ENCODE measurements at regions of chr10 and their contacts with region 1.

Region 1: GRCh38 chr10:35355971-35356724 is 19.8 kb downstream of the CCNY start:
- DNase-seq: no peak
- H3K4me3 ChIP-seq: no peak overlapping the region
- H3K27ac ChIP-seq: no peak overlapping the region
- H3K4me1 ChIP-seq: peaks cover 11 to 41% (median 19%) of the 10 kb centered on the region in 4 experiments
- H3K27me3 ChIP-seq: no peaks in the 10 kb centered on the region

Region 2: DNA sequence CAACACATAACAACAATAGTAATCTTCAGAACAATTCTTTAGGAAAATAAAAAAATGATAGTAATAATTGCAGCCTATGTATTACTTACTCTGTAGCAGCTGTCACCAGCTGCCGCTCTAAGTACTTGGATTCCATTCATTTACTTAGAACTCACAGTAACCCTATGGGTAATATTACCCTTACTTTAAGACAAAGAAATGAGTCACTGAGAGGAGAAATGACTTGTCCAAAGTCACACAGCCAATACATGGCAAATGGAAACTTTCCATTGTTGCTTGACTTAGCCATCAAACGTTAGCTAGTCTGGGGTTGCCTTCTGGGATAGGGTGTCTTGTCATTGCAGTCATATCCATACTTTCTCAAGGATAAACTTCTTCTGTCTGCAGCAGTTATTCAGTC is 16.2 kb before region 1 on chr10:
- CTCF ChIA-PET with region 1: interaction called, 16 read pairs
- POLR2A ChIA-PET with region 1: no interaction called
- DNase-seq: no peak
- H3K4me3 ChIP-seq: no peak overlapping the region
- H3K27ac ChIP-seq: no peak overlapping the region
- H3K4me1 ChIP-seq: peaks cover 13 to 47% (median 37%) of the 10 kb centered on the region in 4 experiments
- H3K27me3 ChIP-seq: no peaks in the 10 kb centered on the region

Measured in common myeloid progenitor, CD34-positive (primary cell).